Psoas muscle (tissue), 8 donors: ENCODE measurements at regions of chr1 and their contacts with region 1.

Region 1: DNA sequence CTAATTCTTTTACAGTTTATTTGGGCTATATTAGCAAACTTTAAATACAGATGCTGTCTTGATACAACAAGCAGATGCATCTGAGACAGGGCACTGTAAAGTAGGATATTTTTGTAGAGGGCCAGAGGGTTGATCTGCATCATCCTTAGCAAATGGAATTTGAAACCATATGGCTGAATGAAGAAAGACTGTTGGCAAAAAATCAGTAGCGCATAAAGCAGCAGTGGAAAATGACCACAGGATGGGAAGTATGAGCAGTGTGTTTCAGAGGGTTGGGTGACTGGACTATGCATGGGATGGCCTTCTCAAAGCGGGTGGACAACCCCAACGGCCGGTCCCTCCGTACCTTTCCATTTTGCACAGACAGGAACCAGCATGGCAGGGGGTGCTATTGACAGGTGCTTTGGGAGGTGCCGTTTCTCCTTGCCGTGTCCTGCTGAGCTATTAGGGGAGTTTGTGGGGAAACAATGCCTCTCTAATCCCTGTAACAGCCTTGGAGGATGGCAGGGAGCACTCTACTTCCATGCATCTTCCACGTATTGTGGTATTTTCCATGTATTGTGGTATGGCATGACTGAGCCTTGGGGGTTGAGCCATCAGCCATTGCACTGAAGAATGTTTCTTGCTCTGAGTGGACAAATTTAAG is 5.9 kb downstream of the LRRC8B start:
- DNase-seq: no peak
- ATAC-seq: peak in 1 of 4 donors; percentile 43
- H3K4me3 ChIP-seq: no peak overlapping the region
- H3K27ac ChIP-seq: no peak overlapping the region
- H3K4me1 ChIP-seq: peaks cover 34% of the 10 kb centered on the region
- H3K27me3 ChIP-seq: no peaks in the 10 kb centered on the region
- CTCF ChIP-seq: no peak

Region 2: GRCh38 chr1:89566761-89567174 is 36.2 kb after region 1 on chr1:
- intact Hi-C with region 1: loop called (anchors 1 to 10 kb)
- DNase-seq: peak; percentile 34 to 68
- ATAC-seq: peak; percentile 53 to 85 (median 78)
- H3K4me3 ChIP-seq: peak overlapping the region; percentile 39
- H3K27ac ChIP-seq: peak overlapping the region; percentile 62
- H3K4me1 ChIP-seq: peaks cover 22% of the 10 kb centered on the region
- H3K27me3 ChIP-seq: no peaks in the 10 kb centered on the region
- CTCF ChIP-seq: no peak